A673 (cell line): ENCODE measurements at regions of chr7 and their contacts with region 1.

Region 1: DNA sequence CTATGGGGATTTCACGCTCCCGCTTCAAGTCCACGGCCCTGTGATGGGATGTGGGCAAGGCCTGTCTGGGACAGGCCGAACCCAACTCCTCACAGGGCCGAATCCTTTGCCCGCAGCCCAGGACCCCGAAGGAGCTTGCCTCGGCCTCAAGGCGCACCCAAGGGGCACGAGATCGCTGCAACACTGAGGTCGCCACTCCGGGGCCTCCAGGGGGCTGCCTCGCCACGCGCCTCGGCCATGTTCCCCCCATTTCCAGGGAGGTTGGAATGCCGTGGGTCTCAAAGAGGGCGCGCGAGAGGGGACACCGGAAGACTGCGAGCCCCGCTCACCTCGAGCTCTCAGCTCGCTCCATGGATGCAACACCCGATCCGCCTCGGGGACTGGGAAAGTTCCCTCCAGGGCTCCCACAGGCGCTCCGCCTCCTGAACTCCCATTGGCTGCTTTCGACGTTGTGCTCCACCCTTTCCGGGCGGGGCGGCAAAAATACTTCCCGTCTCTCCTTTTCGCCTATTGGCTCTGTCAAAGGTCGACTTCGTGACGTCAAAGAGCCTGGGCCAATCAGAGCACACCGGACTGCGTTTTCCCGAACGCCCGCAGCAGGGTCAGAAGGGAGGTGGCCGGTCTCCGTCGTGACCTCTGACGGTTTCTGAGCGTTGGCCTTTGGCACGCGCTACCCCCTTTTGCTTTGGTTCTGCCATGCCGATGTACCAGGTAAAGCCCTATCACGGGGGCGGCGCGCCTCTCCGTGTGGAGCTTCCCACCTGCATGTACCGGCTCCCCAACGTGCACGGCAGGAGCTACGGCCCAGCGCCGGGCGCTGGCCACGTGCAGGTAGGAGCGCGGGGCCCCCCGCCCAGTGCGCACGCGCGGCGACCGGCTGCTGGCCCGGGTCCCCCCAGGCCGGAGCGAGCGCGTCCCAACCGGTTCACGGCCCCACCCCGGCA is at the starts of genes AIMP2 and PMS2:
- DNase-seq: peak; percentile 99
- H3K4me3 ChIP-seq: peak within 1 kb of the TSS; percentile 97
- H3K27ac ChIP-seq: peak within 1 kb of the TSS; percentile 87
- H3K4me1 ChIP-seq: peaks cover 9% of the 10 kb centered on the region
- H3K27me3 ChIP-seq: no peaks in the 10 kb centered on the region
- CTCF ChIP-seq: 0 out of 2 replicates have a peak, but pooled peaks have one; percentile 17
- total RNA-seq, gene AIMP2: 87.4 and 90.1 TPM in 2 replicates
- total RNA-seq, gene PMS2: 14.6 and 16.8 TPM in 2 replicates

Region 2: GRCh38 chr7:5442757-5443305 is 566.1 kb before region 1 on chr7:
- CTCF ChIA-PET with region 1: no interaction called
- POLR2A ChIA-PET with region 1: interaction called, 17 read pairs
- intact Hi-C with region 1: no loop called
- DNase-seq: no peak
- H3K4me3 ChIP-seq: no peak overlapping the region
- H3K27ac ChIP-seq: no peak overlapping the region
- H3K4me1 ChIP-seq: no peaks in the 10 kb centered on the region
- H3K27me3 ChIP-seq: no peaks in the 10 kb centered on the region
- CTCF ChIP-seq: no peak